IMR-90 (cell line): ENCODE measurements at regions of chr1 and their contacts with region 1.

Region 1: DNA sequence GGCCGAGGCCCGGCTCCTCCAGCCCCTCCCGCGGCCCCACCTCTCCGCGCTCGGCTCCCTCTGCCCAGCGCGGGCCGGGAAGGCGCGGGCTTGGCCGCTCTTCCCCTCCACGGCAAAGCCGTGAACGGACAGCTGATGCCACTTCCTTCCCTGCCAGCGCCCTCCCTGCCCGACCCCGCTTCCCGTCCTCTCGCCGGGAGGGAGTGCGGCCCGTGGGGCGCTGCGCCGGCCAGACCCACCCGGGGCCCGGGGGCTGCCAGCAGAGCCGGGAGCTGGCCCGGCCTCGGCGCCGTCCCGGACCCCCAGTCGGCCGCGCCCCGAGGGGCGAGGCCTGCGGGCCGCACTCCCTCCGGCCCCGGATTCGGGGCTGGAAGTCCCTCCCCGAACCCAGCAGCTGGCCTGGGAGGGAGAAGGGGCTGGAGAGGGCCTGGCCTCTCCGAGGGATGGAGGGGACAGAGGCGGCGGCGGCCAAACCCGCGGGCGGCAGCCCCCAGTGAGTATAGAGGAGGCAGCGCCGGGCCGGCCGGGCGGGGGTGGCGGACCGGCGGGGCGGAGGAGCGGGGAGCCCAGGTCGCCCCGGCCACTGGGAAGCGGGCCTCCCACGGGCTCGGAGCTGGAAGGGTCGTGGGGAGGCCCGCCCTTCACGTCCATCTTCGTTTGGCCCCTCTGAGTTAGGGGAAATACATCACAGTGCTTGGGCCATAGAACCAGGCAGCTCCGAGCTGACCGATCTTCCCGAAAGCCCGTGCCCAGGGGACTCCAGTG is at the start of gene KIAA1614:
- DNase-seq: peak; percentile 39
- ATAC-seq: peak; percentile 80
- H3K4me3 ChIP-seq: peak within 1 kb of the TSS; percentile 60
- H3K27ac ChIP-seq: peak within 1 kb of the TSS; percentile 94
- H3K4me1 ChIP-seq: peaks cover 5% of the 10 kb centered on the region
- H3K27me3 ChIP-seq: no peaks in the 10 kb centered on the region
- CTCF ChIP-seq: no peak
- POLR2A ChIP-seq: peak; percentile 36; the same call in 1 of the 2 replicates
- RAD21 ChIP-seq: no peak
- total RNA-seq, gene KIAA1614: 1.7 and 1.8 TPM in 2 replicates

Region 2: GRCh38 chr1:180954005-180954800 is 41.2 kb after region 1 on chr1:
- CTCF ChIA-PET with region 1: no interaction called
- POLR2A ChIA-PET with region 1: no interaction called
- dilution Hi-C with region 1: no loop called
- in situ Hi-C with region 1: no loop called
- intact Hi-C with region 1: no loop called
- DNase-seq: peak; percentile 12
- ATAC-seq: peak; percentile 75
- H3K4me3 ChIP-seq: peak overlapping the region; percentile 39
- H3K27ac ChIP-seq: no peak overlapping the region; the same call in 1 of the 2 replicates
- H3K4me1 ChIP-seq: peaks cover 4% of the 10 kb centered on the region
- H3K27me3 ChIP-seq: no peaks in the 10 kb centered on the region
- CTCF ChIP-seq: no peak
- POLR2A ChIP-seq: no peak
- RAD21 ChIP-seq: no peak

Region 3: GRCh38 chr1:181014477-181015250 is 101.7 kb after region 1 on chr1:
- CTCF ChIA-PET with region 1: no interaction called
- POLR2A ChIA-PET with region 1: interaction called, 12 read pairs
- dilution Hi-C with region 1: no loop called
- in situ Hi-C with region 1: no loop called
- intact Hi-C with region 1: no loop called
- DNase-seq: no peak
- ATAC-seq: no peak
- H3K4me3 ChIP-seq: no peak overlapping the region
- H3K27ac ChIP-seq: no peak overlapping the region
- H3K4me1 ChIP-seq: peaks cover 15% of the 10 kb centered on the region
- H3K27me3 ChIP-seq: no peaks in the 10 kb centered on the region
- CTCF ChIP-seq: no peak
- POLR2A ChIP-seq: no peak
- RAD21 ChIP-seq: no peak

Region 4: DNA sequence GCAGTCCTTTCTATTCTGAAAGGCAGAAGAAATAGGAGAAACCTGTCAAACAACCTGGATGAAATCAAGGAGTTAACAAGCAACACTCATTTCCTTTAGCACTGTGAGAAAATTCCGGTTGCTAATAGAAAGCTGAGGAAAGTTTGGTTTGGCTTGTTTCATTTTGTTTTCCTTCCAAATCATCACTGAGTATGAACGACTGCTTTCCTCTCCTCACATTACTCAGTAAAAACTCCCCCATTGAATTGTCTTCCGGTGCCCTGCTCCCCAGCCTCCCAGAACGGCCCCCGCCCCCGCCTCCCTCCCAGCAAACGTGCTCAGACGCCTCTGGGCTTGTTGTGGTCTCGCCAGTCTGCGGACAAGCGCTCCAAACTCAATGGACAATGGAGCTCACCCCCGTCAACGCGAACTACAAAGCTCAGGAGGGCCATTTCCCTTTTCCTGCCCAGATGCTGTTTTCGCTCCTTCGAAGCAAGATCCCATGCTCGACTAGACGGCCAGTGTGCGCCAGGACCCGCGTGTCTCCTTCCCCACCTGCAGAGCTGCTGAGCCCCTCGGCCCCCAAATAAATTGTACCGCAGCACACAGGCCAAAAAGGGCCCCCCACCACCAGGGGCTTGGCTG is 108.9 kb after region 1 on chr1:
- CTCF ChIA-PET with region 1: no interaction called
- POLR2A ChIA-PET with region 1: no interaction called
- dilution Hi-C with region 1: no loop called
- in situ Hi-C with region 1: no loop called
- intact Hi-C with region 1: loop called (anchors 2 kb)
- DNase-seq: peak; percentile 73
- ATAC-seq: peak; percentile 49
- H3K4me3 ChIP-seq: peak overlapping the region; percentile 93
- H3K27ac ChIP-seq: peak overlapping the region; percentile 78
- H3K4me1 ChIP-seq: no peaks in the 10 kb centered on the region
- H3K27me3 ChIP-seq: no peaks in the 10 kb centered on the region
- CTCF ChIP-seq: no peak
- POLR2A ChIP-seq: no peak
- RAD21 ChIP-seq: no peak